ENCODE measurements at regions of chr2 and their contacts with region 1.

Region 1: DNA sequence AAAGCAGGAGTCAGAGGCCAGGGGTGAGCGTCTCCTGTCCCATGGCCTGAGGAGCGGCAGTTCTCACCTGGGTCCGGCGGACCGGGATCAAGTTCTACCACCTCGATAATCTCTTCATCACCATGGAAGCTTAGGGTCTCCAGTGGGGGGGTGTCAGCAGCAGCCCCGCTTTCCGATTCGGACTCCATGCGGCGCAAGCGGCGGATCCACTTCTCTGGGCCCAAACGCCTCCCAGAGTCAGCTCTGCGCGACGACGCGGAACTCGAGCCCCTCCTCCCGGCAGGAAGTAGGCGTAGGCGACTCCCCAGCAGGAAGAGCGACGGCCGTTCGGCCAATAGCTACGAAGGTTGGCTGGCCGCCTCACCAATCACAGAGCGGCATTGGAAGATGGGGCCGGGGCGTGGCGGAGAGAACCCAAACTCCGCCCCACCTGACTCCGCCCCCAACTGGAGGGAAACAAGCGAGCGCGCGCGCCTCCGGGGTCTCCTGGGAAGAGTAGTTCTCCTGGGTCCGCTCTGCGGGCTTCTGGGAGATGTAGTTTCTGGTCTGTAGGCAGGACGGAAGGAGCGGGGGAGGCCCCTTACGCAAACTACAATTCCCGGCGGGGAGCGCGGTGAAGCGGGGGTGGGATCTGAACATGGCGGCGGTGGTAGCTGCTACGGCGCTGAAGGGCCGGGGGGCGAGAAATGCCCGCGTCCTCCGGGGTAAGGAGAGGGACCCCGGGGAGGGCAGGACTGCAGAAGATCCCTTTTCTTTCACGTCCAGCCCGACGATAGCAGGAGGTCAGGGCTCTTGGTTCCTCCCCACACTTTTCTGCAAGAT is at the starts of genes AAMP and PNKD:
- DNase-seq: peak; percentile 100
- H3K4me3 Mint-ChIP-seq: peak within 1 kb of the TSS; percentile 97
- H3K27ac Mint-ChIP-seq: peak within 1 kb of the TSS; percentile 88
- H3K4me1 Mint-ChIP-seq: peaks cover 42% of the 10 kb centered on the region
- H3K27me3 Mint-ChIP-seq: no peaks in the 10 kb centered on the region
- CTCF ChIP-seq: no peak
- total RNA-seq, gene AAMP: 95.7 and 98.7 TPM in 2 replicates
- total RNA-seq, gene PNKD: 13.0 and 23.1 TPM in 2 replicates

Region 2: GRCh38 chr2:217918308-217919024 is 351.6 kb before region 1 on chr2:
- CTCF ChIA-PET with region 1: no interaction called
- POLR2A ChIA-PET with region 1: no interaction called
- intact Hi-C with region 1: no loop called
- DNase-seq: no peak
- H3K4me3 Mint-ChIP-seq: no peak overlapping the region
- H3K27ac Mint-ChIP-seq: no peak overlapping the region
- H3K4me1 Mint-ChIP-seq: peaks cover 6% of the 10 kb centered on the region
- H3K27me3 Mint-ChIP-seq: peaks cover 12% of the 10 kb centered on the region
- CTCF ChIP-seq: no peak

Region 3: DNA sequence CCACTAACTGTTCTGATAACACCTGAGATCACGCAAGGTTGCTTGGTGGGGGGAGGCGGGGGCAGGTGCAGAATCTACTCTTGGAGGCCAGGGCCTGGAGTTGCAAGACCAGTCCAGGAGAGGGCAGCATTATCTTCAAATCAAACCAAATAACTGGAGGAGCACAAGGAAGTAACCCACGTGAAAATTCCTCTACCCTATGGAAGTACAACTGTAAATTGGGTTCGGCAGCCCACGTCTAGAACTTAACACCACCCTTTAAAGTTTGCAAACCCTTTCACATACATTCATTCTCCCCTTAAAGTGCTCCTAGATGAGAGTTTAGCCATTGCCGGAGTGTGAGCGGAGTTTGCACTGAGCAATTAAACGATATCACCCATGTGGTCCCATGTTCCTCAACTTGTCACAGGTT is 83.7 kb before region 1 on chr2:
- CTCF ChIA-PET with region 1: interaction called, 7 read pairs
- POLR2A ChIA-PET with region 1: interaction called, 7 read pairs
- intact Hi-C with region 1: loop called (anchors 1 kb)
- DNase-seq: peak; percentile 82
- H3K4me3 Mint-ChIP-seq: no peak overlapping the region
- H3K27ac Mint-ChIP-seq: no peak overlapping the region
- H3K4me1 Mint-ChIP-seq: peaks cover 6% of the 10 kb centered on the region
- H3K27me3 Mint-ChIP-seq: no peaks in the 10 kb centered on the region
- CTCF ChIP-seq: peak; percentile 84

Region 4: DNA sequence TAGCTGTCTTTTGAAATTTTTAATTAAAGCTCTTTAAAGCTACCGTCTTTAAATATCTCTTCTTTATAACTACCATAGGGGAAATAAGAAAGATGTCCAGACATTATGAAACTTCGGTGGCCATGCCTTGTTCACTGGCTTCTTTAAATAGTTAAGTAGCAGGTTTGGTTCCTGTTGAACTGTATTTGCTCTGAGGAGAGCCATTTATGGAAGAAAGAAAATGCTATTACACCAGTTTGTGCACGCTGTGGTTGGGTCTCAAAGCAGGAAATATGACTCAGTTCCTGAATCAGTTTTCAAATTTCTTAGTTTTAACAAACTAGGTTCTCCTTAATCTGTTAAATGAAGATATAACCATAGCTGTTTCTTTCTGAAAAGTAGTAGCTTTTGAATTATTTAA is 40.9 kb before region 1 on chr2:
- CTCF ChIA-PET with region 1: interaction called, 4 read pairs
- POLR2A ChIA-PET with region 1: interaction called, 12 read pairs
- intact Hi-C with region 1: no loop called
- DNase-seq: peak; percentile 72
- H3K4me3 Mint-ChIP-seq: no peak overlapping the region
- H3K27ac Mint-ChIP-seq: peak overlapping the region; percentile 85
- H3K4me1 Mint-ChIP-seq: peaks cover 26% of the 10 kb centered on the region
- H3K27me3 Mint-ChIP-seq: no peaks in the 10 kb centered on the region
- CTCF ChIP-seq: no peak

Region 5: DNA sequence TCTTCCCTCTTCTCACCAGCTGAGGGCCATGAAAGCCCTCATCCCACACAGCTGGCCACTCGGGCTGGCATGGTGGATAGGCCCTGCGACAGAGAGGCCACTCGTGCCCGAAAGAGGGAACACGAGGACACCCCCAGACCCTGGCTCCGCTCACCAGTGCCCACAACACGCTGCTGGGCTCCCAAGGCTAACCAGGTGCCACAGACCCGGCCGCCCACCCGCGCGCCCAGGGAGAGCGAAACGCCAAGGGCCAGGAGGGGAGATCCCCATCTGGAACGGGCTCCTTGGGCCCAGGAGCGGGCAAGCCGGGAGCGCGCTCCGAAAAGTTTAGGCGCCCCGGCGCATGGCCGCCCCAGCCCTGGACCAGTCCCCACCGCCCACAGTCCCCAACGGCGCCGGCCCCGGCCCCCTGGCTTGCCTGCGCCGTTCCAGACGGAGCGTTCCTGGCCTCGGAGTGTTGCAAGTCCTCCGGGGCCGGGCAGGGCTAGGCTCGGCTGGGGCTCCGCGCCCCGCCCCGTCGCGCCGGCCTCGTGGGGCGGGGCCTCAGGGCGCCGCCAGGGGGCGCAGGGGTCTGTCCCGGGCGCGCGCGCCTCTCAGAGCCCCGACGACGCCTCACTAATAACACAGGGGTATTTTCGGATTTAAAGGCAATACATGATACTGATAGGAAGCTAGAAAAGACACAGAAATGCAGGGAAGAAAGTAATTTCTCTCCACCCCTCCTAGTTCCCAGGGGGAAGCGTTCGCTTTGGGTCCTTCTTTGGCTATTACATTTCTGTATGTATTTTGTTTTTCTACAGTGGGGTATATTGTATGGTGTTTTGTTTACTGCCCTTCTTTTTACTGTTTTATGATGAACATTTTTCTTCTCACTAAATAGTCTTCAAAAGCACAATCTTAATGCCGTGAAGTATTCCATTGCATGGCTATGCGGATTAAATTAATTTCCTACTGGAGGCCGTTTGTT is 22.2 kb after region 1 on chr2 and contains the start of gene TMBIM1:
- CTCF ChIA-PET with region 1: interaction called, 215 read pairs
- POLR2A ChIA-PET with region 1: interaction called, 390 read pairs
- intact Hi-C with region 1: no loop called
- DNase-seq: peak; percentile 77
- H3K4me3 Mint-ChIP-seq: peak within 1 kb of the TSS; percentile 75
- H3K27ac Mint-ChIP-seq: peak within 1 kb of the TSS; percentile 91
- H3K4me1 Mint-ChIP-seq: peaks cover 34% of the 10 kb centered on the region
- H3K27me3 Mint-ChIP-seq: no peaks in the 10 kb centered on the region
- CTCF ChIP-seq: peak; percentile 90
- total RNA-seq, gene TMBIM1: 96.8 and 107 TPM in 2 replicates

Region 6: GRCh38 chr2:218360447-218360846 is 90.3 kb after region 1 on chr2:
- CTCF ChIA-PET with region 1: interaction called, 67 read pairs
- POLR2A ChIA-PET with region 1: interaction called, 3 read pairs
- intact Hi-C with region 1: loop called (anchors 1 kb)
- DNase-seq: no peak
- H3K4me3 Mint-ChIP-seq: no peak overlapping the region
- H3K27ac Mint-ChIP-seq: no peak overlapping the region
- H3K4me1 Mint-ChIP-seq: no peaks in the 10 kb centered on the region
- H3K27me3 Mint-ChIP-seq: no peaks in the 10 kb centered on the region
- CTCF ChIP-seq: no peak

Region 7: DNA sequence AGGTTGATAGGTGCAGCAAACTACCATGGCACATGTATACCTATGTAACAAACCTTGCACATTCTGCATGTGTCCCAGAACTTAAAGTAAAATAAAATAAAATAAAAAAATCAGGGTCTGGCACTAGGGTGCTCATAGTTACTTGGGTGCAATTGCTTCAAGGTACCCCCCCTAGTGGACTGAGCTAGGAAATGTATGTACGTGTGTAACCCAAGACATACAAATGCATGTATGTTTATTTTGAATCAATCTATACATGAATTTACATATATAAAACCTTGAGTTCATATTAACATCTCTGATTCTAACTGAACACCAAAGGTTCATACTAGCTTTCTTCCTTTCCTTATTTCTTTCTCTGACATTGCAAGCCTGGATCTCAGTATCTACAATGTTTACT is 246.5 kb after region 1 on chr2:
- CTCF ChIA-PET with region 1: no interaction called
- POLR2A ChIA-PET with region 1: no interaction called
- intact Hi-C with region 1: no loop called
- DNase-seq: peak; percentile 34
- H3K4me3 Mint-ChIP-seq: no peak overlapping the region
- H3K27ac Mint-ChIP-seq: no peak overlapping the region
- H3K4me1 Mint-ChIP-seq: no peaks in the 10 kb centered on the region
- H3K27me3 Mint-ChIP-seq: no peaks in the 10 kb centered on the region
- CTCF ChIP-seq: peak; percentile 18

Measured in MCF 10A (cell line).